Activated CD8-positive, alpha-beta T cell treated with anti-CD3 and anti-CD28 coated beads for 36 hours (primary cell): ENCODE measurements at regions of chr9 and their contacts with region 1.

Region 1: GRCh38 chr9:35903049-35903448 is 3.0 kb upstream of the HRCT1 start:
- DNase-seq: peak; percentile 35
- ATAC-seq: peak; percentile 67
- H3K4me3 Mint-ChIP-seq: no peak overlapping the region
- H3K27ac Mint-ChIP-seq: no peak overlapping the region
- H3K4me1 Mint-ChIP-seq: peaks cover 9% of the 10 kb centered on the region
- H3K27me3 Mint-ChIP-seq: peaks cover 3% of the 10 kb centered on the region
- CTCF ChIP-seq: peak; percentile 93

Region 2: GRCh38 chr9:35798658-35799374 is 104.2 kb before region 1 on chr9:
- CTCF ChIA-PET with region 1: no interaction called
- POLR2A ChIA-PET with region 1: no interaction called
- intact Hi-C with region 1: no loop called
- DNase-seq: peak; percentile 59
- ATAC-seq: peak; percentile 92
- H3K4me3 Mint-ChIP-seq: no peak overlapping the region
- H3K27ac Mint-ChIP-seq: no peak overlapping the region
- H3K4me1 Mint-ChIP-seq: peaks cover 20% of the 10 kb centered on the region
- H3K27me3 Mint-ChIP-seq: no peaks in the 10 kb centered on the region
- CTCF ChIP-seq: no peak

Region 3: DNA sequence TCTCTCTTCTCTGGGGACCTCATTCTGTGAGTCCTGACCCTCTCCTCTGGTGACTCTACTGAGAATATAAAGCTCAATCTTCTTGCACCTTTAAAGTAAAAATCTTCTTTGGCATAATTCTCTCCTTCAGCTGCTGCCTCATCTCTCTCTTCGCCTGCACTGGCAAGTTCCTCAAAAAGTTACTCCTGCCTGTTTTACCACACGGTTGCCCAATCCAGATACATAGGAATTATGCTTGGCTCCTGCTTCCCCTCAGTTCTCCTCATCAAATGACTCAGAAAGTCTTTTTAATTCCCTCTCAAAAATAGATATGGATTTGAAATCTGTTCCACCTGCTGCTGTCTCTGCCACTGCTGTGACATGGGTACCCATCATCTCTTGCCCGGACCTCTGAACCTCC is 11.4 kb before region 1 on chr9:
- CTCF ChIA-PET with region 1: interaction called, 10 read pairs
- POLR2A ChIA-PET with region 1: no interaction called
- intact Hi-C with region 1: no loop called
- DNase-seq: no peak
- ATAC-seq: no peak
- H3K4me3 Mint-ChIP-seq: no peak overlapping the region
- H3K27ac Mint-ChIP-seq: no peak overlapping the region
- H3K4me1 Mint-ChIP-seq: no peaks in the 10 kb centered on the region
- H3K27me3 Mint-ChIP-seq: peaks cover 10% of the 10 kb centered on the region
- CTCF ChIP-seq: no peak

Region 4: GRCh38 chr9:35923927-35924763 is 21.1 kb after region 1 on chr9:
- CTCF ChIA-PET with region 1: interaction called, 11 read pairs
- POLR2A ChIA-PET with region 1: no interaction called
- intact Hi-C with region 1: no loop called
- DNase-seq: peak; percentile 72
- ATAC-seq: peak; percentile 91
- H3K4me3 Mint-ChIP-seq: no peak overlapping the region
- H3K27ac Mint-ChIP-seq: no peak overlapping the region
- H3K4me1 Mint-ChIP-seq: peaks cover 17% of the 10 kb centered on the region
- H3K27me3 Mint-ChIP-seq: no peaks in the 10 kb centered on the region
- CTCF ChIP-seq: no peak

Region 5: GRCh38 chr9:35954942-35955546 is 52.0 kb after region 1 on chr9:
- CTCF ChIA-PET with region 1: interaction called, 15 read pairs
- POLR2A ChIA-PET with region 1: no interaction called
- intact Hi-C with region 1: no loop called
- DNase-seq: peak; percentile 67
- ATAC-seq: peak; percentile 80
- H3K4me3 Mint-ChIP-seq: no peak overlapping the region
- H3K27ac Mint-ChIP-seq: no peak overlapping the region
- H3K4me1 Mint-ChIP-seq: no peaks in the 10 kb centered on the region
- H3K27me3 Mint-ChIP-seq: peaks cover 4% of the 10 kb centered on the region
- CTCF ChIP-seq: peak; percentile 79